ENCODE measurements at regions of chr6 and their contacts with region 1.

Region 1: DNA sequence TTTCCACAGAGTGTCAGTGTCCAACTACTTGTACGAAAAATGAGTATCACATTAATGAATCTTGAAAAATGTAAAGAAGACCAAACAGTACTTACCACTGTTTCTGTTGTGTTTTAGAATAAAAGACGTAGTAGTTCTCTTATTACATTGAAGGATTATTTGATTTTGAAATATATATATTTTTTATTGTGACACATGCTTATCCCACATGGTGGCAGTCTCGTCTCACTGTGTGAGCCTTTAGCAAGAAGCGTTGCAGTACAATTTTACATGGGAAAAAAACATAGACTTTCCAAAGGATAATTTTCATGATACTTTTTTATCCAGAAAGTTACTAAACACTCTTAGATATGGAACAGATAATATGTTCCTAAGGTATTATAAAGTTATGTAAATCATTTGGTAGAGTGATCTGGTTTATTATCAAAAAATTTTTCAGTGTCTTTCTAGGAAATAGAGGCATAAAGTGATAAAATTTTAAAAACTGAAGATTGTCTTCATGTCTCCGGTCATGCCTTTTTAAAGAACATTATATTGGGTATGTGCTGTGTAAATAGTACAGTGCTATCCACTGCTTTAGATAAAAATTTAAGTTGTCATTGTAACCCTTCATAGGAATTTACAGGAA is 117.5 kb upstream of the SAMD5 start:
- DNase-seq: no peak
- ATAC-seq: no peak
- H3K4me3 Mint-ChIP-seq: no peak overlapping the region
- H3K27ac Mint-ChIP-seq: no peak overlapping the region
- H3K4me1 Mint-ChIP-seq: peaks cover 3% of the 10 kb centered on the region
- H3K27me3 Mint-ChIP-seq: no peaks in the 10 kb centered on the region
- CTCF ChIP-seq: no peak

Region 2: DNA sequence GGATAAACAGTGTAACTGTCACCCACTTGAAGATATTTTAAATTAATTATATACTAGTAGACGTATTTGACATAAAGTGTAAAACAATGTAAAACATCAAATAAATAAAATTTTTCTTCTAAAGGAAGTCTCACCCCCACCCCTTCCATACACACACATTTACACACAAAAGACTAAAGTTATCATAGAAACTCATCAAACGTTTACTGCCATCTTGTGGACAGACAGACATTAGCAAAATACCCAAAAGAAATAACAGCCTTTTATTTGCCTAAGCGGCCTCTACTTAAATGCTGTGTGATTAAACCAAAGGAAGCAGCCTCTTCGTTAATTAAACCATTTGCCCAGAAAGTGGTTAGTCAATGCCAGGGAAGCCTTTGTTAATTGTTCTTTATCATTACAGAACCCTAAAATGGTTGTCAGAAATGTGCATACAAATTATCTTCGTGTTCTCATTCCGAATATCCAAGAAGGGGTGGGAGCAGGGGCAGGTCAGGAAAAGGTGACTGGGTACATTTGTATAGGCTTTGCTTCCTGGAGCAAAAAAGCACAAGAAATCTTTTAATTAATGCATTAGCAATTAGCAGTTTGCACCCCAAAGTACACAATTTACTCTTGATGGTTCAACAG is 775.4 kb after region 1 on chr6:
- CTCF ChIA-PET with region 1: no interaction called
- POLR2A ChIA-PET with region 1: no interaction called
- intact Hi-C with region 1: loop called (anchors 2 kb)
- DNase-seq: no peak
- ATAC-seq: no peak
- H3K4me3 Mint-ChIP-seq: no peak overlapping the region
- H3K27ac Mint-ChIP-seq: no peak overlapping the region
- H3K4me1 Mint-ChIP-seq: no peaks in the 10 kb centered on the region
- H3K27me3 Mint-ChIP-seq: peaks cover 11% of the 10 kb centered on the region
- CTCF ChIP-seq: no peak

Measured in activated B cell treated with CpG ODN at 0.5 μM for 24 hours (primary cell).